Caco-2 (cell line): ENCODE measurements at regions of chr4 and their contacts with region 1.

Region 1: GRCh38 chr4:22356987-22357596 is 158.8 kb downstream of the ADGRA3 start:
- DNase-seq: peak in 1 of 2 experiments; percentile 2
- H3K4me3 ChIP-seq: no peak overlapping the region
- H3K4me3 Mint-ChIP-seq: no peak overlapping the region
- H3K27ac Mint-ChIP-seq: no peak overlapping the region
- H3K4me1 ChIP-seq: no peaks in the 10 kb centered on the region
- H3K4me1 Mint-ChIP-seq: no peaks in the 10 kb centered on the region
- H3K27me3 ChIP-seq: no peaks in the 10 kb centered on the region
- H3K27me3 Mint-ChIP-seq: no peaks in the 10 kb centered on the region
- CTCF ChIP-seq: peak in 1 of 2 experiments; percentile 35

Region 2: GRCh38 chr4:22237155-22237751 is 119.8 kb before region 1 on chr4:
- CTCF ChIA-PET with region 1: interaction called, 3 read pairs
- POLR2A ChIA-PET with region 1: no interaction called
- intact Hi-C with region 1: loop called (anchors 5 kb)
- DNase-seq: peak in 1 of 2 experiments; percentile 34
- H3K4me3 ChIP-seq: no peak overlapping the region
- H3K4me3 Mint-ChIP-seq: no peak overlapping the region
- H3K27ac Mint-ChIP-seq: no peak overlapping the region
- H3K4me1 ChIP-seq: peaks cover 5% of the 10 kb centered on the region; the same call in 1 of the 2 replicates
- H3K4me1 Mint-ChIP-seq: no peaks in the 10 kb centered on the region
- H3K27me3 ChIP-seq: no peaks in the 10 kb centered on the region
- H3K27me3 Mint-ChIP-seq: peaks cover 6% of the 10 kb centered on the region
- CTCF ChIP-seq: peak in 1 of 2 experiments; percentile 47

Region 3: DNA sequence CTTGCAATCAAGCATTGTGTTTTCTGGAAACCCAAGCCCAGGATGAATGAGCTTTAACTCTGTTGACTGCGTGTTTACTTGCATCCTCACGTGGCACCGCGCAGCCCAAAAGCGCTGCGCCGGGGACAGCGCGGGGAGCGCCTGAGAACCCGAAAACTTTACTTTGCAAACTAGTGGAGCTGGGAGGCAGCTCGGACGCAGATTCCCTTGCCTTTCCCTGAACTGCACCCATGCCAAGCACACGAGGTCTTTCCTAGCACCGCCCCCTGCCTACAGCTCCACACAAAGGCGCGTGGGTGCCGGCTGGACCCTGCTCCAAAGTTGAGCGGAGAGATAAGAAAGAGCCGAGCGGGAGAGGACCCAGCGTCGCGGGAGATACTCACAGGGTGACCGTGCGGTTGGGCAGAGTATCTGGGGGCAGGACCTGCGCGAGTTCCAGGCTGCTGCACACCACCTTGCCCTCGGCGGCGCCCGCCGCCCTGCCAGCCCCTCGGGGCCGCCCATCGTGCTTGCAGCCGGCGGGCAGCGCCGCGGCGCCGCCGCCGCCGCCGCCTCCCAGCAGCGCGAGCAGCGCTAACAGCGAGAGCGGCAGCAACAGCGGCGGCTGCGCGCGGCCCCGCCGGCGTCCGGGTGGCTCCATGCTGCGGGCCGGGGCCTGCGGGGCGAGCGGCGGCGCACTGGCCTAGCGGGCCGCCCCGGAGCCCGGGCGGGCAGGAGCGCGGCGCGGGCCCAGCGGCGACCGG is 158.2 kb after region 1 on chr4:
- CTCF ChIA-PET with region 1: no interaction called
- POLR2A ChIA-PET with region 1: no interaction called
- intact Hi-C with region 1: no loop called
- DNase-seq: peak; percentile 79 to 83
- H3K4me3 ChIP-seq: peak overlapping the region; percentile 60
- H3K4me3 Mint-ChIP-seq: peak overlapping the region; percentile 95
- H3K27ac Mint-ChIP-seq: peak overlapping the region; percentile 97
- H3K4me1 ChIP-seq: peaks cover 11% of the 10 kb centered on the region
- H3K4me1 Mint-ChIP-seq: peaks cover 10% of the 10 kb centered on the region
- H3K27me3 ChIP-seq: no peaks in the 10 kb centered on the region
- H3K27me3 Mint-ChIP-seq: no peaks in the 10 kb centered on the region
- CTCF ChIP-seq: no peak